HEK293 (cell line): ENCODE measurements at regions of chr2 and their contacts with region 1.

Region 1: DNA sequence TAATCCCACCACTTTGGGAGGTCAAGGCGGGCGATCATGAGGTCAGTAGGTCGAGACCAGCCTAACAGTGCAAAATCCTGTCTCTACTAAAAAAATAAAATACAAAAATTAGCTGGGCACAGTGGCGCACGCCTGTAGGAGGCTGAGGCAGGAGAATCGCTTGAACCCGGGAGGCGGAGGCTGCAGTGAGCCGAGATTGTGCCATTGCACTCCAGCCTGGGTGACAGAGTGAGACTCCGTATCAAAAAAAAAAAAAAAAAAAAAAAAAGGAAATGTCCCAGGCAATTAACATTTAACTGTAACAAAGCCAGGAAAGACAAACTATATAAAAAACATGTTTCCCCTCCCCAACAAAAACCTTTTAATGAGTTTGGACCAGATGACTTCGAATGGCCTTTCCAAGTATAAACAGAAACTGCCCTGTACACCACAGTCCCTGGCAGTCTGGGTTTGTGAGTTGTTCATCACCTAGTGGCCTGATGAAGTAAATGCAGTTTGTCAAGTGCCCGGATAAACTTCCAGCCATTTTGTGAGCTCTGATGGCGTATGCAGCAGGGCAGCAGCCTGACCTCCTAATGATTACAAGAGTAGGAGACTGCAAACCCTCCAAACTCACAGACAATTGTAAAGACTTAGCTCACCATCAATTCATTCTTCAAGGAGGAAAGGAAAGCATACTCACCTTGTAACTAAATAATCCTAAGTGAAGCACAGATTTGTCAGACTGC is 16.6 kb upstream of the PCBP1 start:
- H3K4me3 ChIP-seq: no peak overlapping the region
- H3K27ac ChIP-seq: 0 out of 2 replicates have a peak overlapping the region, but pooled peaks have one; percentile 52
- H3K4me1 ChIP-seq: no peaks in the 10 kb centered on the region
- CTCF ChIP-seq: no peak

Region 2: GRCh38 chr2:70086838-70087701 is 16.4 kb after region 1 on chr2 and contains the start of gene PCBP1:
- CTCF ChIA-PET with region 1: interaction called, 14 read pairs
- POLR2A ChIA-PET with region 1: interaction called, 3 read pairs
- H3K4me3 ChIP-seq: peak within 1 kb of the TSS; percentile 70
- H3K27ac ChIP-seq: peak within 1 kb of the TSS; percentile 100
- H3K4me1 ChIP-seq: peaks cover 11% of the 10 kb centered on the region
- CTCF ChIP-seq: no peak